Activated naive CD8-positive, alpha-beta T cell treated with anti-CD3 and anti-CD28 coated beads, Interleukin-2, amount 10 ng/mL, durations not matched to agents 7 days and 5 days (primary cell): ENCODE measurements at regions of chr22 and their contacts with region 1.

Region 1: GRCh38 chr22:19854778-19855503 is at the starts of genes GNB1L and RTL10:
- DNase-seq: peak; percentile 97
- ATAC-seq: peak; percentile 93
- H3K4me3 Mint-ChIP-seq: peak within 1 kb of the TSS; percentile 98
- H3K27ac Mint-ChIP-seq: peak within 1 kb of the TSS; percentile 95
- H3K4me1 Mint-ChIP-seq: peaks cover 34% of the 10 kb centered on the region
- H3K27me3 Mint-ChIP-seq: no peaks in the 10 kb centered on the region
- total RNA-seq, gene GNB1L: 11.9 to 12.7 TPM
- total RNA-seq, gene RTL10: 18.4 to 18.9 TPM

Region 2: DNA sequence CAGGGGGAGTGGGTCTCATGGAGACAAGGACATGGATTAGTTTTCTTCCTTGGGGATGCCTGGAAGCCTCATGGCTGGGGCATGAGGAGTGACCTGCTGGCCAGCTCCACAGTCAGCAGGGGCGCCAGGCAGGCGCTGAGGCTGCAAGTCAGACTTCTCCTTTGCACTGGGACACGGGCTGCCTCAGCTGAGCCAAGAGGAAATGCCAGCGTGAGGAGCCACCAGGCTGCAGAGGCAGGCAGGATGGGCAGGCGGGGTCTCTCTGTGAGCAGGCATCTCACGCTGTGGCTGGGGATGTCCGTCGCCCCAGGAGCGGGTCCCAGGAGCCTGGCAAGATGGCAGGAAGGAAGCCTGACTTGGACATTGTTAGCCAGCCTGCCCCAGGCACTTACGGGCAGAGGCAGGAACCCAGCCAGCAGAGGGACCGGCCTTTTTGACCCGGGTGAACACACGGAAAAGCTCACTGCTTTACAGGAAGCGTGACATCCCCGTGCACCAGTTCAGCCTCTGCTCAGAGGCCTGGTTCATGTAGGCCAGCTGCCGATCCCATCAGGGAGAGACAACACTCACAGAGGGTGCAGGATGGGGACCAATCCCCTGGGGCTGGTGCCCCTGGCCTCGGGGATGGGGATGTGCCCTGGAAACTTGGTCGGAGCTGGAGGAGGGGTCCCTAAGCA is 10.4 kb before region 1 on chr22:
- POLR2A ChIA-PET with region 1: interaction called, 19 read pairs
- DNase-seq: peak; percentile 55
- ATAC-seq: peak; percentile 84
- H3K4me3 Mint-ChIP-seq: peak overlapping the region; percentile 58
- H3K27ac Mint-ChIP-seq: peak overlapping the region; percentile 86
- H3K4me1 Mint-ChIP-seq: peaks cover 17% of the 10 kb centered on the region
- H3K27me3 Mint-ChIP-seq: no peaks in the 10 kb centered on the region

Region 3: GRCh38 chr22:19891317-19892256 is 36.6 kb after region 1 on chr22:
- POLR2A ChIA-PET with region 1: interaction called, 30 read pairs
- DNase-seq: peak; percentile 67
- ATAC-seq: peak; percentile 85
- H3K4me3 Mint-ChIP-seq: peak overlapping the region; percentile 82
- H3K27ac Mint-ChIP-seq: peak overlapping the region; percentile 92
- H3K4me1 Mint-ChIP-seq: peaks cover 39% of the 10 kb centered on the region
- H3K27me3 Mint-ChIP-seq: no peaks in the 10 kb centered on the region

Region 4: GRCh38 chr22:19901577-19902244 is 46.8 kb after region 1 on chr22:
- POLR2A ChIA-PET with region 1: no interaction called
- DNase-seq: no peak
- ATAC-seq: no peak
- H3K4me3 Mint-ChIP-seq: no peak overlapping the region
- H3K27ac Mint-ChIP-seq: no peak overlapping the region
- H3K4me1 Mint-ChIP-seq: peaks cover 1% of the 10 kb centered on the region
- H3K27me3 Mint-ChIP-seq: no peaks in the 10 kb centered on the region

Region 5: GRCh38 chr22:19941365-19942082 is 86.6 kb after region 1 on chr22 and contains the starts of genes COMT and TXNRD2:
- POLR2A ChIA-PET with region 1: interaction called, 12 read pairs
- DNase-seq: peak; percentile 86
- ATAC-seq: peak; percentile 88
- H3K4me3 Mint-ChIP-seq: peak within 1 kb of the TSS; percentile 94
- H3K27ac Mint-ChIP-seq: peak within 1 kb of the TSS; percentile 95
- H3K4me1 Mint-ChIP-seq: peaks cover 23% of the 10 kb centered on the region
- H3K27me3 Mint-ChIP-seq: no peaks in the 10 kb centered on the region
- total RNA-seq, gene COMT: 68.6 to 70.0 TPM
- total RNA-seq, gene TXNRD2: 20.7 to 20.8 TPM